ENCODE measurements at regions of chr10 and their contacts with region 1.

Region 1: DNA sequence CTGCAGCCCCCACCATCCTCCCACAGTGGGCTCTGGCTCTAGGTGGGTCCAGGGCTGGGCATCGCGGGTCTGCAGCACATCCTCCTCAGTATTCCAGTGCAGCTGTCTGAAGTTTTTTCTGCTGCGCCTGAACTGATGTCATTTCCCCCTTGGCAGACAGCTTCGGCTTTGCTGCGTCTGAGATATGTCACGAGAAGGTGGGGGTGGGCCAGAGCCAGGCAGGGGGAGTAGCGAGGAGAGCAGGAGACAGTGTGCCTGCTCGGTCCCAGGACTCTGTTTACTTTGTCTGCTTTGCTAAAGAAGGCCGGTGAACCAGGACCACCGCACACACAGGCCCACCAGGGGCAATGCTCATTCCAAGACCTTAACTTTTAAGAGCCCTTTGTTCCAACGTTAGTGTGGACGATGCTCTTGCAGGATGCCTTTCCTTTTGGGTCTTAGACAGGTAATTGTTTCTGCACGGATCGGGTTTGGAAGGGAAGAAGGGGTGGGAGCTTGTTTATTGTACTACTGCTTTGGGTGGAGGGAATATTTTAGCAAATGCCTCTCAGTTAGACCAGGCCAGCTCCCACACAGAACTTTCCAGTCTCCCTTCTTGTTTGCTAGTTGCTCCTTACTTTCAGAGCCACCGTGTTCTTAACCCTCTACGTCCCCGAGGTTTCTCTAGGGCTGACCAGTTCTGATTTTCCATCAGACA is 32.4 kb downstream of the WBP1L start:
- DNase-seq: peak; percentile 97
- H3K4me3 ChIP-seq: peak overlapping the region; percentile 24 to 62 (median 49)
- H3K27ac ChIP-seq: peak overlapping the region; percentile 93 to 99 (median 95)
- H3K4me1 ChIP-seq: peaks cover 0 to 98% (median 81%) of the 10 kb centered on the region in 4 donors
- H3K27me3 ChIP-seq: no peaks in the 10 kb centered on the region
- CTCF ChIP-seq: no peak
- EP300 ChIP-seq: peak; percentile 57 to 95 (median 78)
- POLR2A ChIP-seq: peak; percentile 79 to 81

Region 2: DNA sequence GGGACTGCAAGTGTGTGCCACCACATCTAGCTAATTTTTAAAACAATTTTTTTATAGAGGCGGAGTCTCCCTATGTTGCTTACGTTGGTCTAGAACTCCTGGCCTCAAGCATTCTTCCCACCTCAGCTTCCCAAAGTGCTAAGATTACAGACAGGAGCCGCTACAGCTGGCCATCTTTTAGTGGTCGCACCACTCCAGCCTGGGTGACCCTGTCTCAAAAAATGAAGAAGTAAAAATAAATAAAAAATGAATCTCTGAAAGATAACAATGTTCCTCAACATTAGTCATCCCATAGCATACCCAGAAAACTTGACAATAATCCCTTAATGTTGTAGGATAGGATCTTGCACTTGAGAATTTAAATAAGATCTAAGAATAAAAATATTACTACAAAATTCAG is 14.1 kb before region 1 on chr10:
- intact Hi-C with region 1: loop called (anchors 2 kb)
- DNase-seq: no peak
- H3K4me3 ChIP-seq: no peak overlapping the region
- H3K27ac ChIP-seq: peak overlapping the region in 2 of 4 donors; percentile 27 to 85
- H3K4me1 ChIP-seq: peaks cover 0 to 60% (median 42%) of the 10 kb centered on the region in 4 donors
- H3K27me3 ChIP-seq: no peaks in the 10 kb centered on the region
- CTCF ChIP-seq: no peak
- EP300 ChIP-seq: no peak
- POLR2A ChIP-seq: no peak